ENCODE measurements at regions of chr4 and their contacts with region 1.

Region 1: GRCh38 chr4:126441173-126442035 is 1126.6 kb downstream of the FAT4 start:
- DNase-seq: no peak

Region 2: GRCh38 chr4:126482311-126482710 is 40.9 kb after region 1 on chr4:
- intact Hi-C with region 1: loop called (anchors 1 kb)
- DNase-seq: no peak